Cardiac septum (tissue), 1 donor: ENCODE measurements at regions of chr3 and their contacts with region 1.

Region 1: DNA sequence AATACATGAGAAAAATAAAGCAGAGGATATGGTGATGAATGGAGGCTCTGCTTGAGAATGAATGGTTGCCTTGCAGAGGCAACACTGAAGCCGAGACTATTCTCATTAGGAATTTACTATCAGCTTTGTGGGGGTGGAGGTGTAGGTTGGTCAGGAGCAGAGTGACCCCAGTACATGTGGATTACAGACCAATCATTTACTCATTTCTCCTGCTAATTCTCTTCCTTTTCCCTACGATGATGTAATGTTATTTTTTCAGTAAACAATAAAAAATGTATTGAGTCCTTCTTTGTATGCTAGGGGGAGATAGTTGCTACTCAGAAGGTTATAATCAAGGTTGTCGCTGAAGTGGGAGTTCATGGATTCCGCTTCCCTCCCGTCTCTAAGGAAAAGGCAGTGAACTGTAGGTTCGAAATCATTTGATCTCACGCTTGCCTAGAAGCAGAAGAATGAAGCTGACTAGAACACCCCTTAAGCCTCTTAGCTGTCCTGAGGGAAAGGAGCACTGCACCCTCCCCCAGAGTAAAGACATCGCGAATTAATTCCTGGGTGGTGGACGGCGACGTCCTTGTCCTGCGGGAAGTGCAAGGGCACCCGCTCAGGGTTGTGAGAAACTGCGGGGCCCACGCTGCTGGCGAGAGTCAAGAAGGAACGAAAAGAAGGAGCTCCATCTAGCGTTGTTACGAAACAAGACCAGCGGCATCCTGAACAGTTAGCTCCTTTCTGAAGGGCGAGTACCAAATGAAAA is 213.2 kb upstream of the PFN2 start:
- DNase-seq: peak; percentile 82

Region 2: DNA sequence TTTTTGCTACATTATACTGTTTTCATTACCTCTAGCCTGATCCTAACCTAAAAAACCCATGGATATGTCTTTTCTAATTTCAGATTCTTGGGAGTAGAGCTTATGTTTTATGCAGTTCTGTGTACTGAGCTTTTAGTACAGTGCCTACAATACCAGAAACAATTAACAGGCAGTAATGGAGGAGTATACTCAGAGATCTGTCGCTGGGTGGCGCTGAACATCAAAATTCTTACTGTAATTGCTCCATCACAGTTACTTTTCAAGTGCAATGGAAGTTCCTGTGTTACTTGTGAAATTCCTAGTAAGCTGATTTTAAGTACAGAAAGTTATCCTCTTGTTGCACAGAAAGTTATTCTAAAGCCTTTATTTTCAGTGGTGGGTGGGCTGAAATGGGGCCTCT is 304.0 kb before region 1 on chr3:
- intact Hi-C with region 1: loop called (anchors 10 kb)
- DNase-seq: no peak

Region 3: DNA sequence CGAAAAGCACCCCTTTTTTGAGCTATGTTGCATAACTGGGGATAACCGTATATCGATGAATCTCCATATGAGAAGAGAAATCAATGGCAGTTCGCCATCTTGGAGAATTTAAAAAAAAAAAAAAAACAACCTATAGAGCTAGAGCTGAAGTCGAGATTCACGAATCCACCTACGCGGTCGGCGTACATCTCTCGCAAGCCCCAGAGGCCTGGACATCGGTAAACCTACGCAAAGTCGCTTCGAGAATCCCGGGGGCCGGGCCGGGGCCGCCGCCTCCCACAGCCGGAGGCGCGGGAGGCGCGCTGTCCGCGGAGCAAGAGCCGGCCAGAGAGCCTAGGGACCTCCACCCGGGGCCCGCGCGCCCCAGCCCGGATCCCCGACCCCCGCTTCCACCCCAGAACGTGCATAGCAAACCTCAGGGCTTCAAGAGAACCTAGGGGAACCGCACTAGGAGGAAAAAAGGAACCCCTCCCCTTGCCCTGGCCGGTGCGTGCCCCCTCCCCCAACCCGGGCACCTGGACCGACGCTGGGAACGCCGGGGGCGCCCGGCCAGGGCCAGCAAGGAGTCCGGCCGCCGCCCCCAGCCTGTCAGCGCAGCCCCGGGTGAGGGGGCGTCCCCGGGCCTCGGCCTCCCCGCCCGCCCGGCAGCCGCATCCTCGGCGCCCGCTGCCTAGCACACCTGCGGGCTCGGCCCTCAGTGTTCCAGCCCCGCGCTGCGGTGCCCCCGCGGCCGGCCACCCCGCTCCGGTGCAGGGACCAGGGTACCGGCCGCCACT is 213.7 kb before region 1 on chr3:
- intact Hi-C with region 1: loop called (anchors 1 kb)
- DNase-seq: peak; percentile 88

Region 4: GRCh38 chr3:150216041-150216811 is 32.4 kb after region 1 on chr3:
- intact Hi-C with region 1: loop called (anchors 5 kb)
- DNase-seq: peak; percentile 84

Region 5: GRCh38 chr3:150314248-150315004 is 130.6 kb after region 1 on chr3:
- intact Hi-C with region 1: no loop called
- DNase-seq: no peak

Region 6: DNA sequence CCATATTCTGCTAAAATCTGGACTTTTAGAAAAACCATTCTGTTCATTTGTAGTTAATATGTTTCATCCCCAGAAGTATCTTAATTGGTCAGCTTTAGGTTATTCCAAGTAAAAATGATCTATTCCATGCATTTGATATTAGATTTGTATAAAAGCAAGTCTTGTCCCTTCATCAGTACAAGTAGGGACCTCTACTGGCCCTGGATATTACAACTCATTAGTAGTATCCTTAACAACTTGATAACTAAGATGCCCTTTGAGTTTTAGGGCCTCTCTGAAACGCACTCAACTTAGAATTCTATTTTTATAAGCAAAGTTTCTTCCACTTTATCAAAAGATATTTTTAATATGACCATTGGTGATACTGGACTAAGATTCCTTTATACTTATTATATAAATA is 394.0 kb after region 1 on chr3:
- intact Hi-C with region 1: no loop called
- DNase-seq: no peak